Caco-2 (cell line): ENCODE measurements at regions of chr17 and their contacts with region 1.

Region 1: GRCh38 chr17:81142301-81143199 is 22.8 kb upstream of the PVALEF start:
- DNase-seq: peak; percentile 88 to 90
- H3K4me3 ChIP-seq: no peak overlapping the region
- H3K4me3 Mint-ChIP-seq: no peak overlapping the region
- H3K27ac Mint-ChIP-seq: no peak overlapping the region
- H3K4me1 ChIP-seq: peaks cover 6% of the 10 kb centered on the region
- H3K4me1 Mint-ChIP-seq: no peaks in the 10 kb centered on the region
- H3K27me3 ChIP-seq: no peaks in the 10 kb centered on the region
- H3K27me3 Mint-ChIP-seq: no peaks in the 10 kb centered on the region
- CTCF ChIP-seq: peak; percentile 62 to 81

Region 2: DNA sequence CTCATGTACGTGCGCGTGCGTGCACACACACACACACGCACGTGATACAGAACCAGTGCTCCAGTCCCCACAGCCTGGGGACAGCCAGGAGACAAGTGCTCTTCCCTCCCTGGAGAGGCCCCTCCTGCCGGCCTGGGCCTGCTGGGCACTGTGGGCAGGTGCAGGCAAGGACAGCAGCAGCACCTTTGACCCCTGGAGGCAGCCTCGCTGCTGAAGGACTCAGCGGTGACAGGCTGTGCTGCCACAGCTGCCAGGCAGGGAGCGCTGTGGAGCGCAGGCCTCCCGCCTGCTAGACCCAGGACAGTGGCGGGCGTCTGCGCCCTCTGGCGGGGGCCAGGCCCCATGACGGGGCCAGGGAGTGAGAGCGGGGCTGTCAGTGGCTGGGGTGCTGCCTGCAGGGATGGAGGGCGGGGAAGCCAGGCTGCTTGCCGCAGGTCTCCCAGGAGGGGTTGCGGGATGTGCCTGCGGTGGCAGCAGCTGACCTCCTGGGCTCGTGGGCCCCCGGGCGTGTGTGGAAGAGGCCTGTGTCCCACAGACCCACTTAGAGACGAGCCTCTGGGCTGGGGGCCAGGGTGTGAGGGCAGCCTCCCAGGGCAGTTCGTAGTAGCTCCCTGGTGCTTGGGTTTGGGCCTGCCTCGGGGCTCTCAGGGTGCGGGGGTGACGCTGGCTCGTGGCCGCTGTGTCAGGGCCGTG is 40.8 kb before region 1 on chr17:
- CTCF ChIA-PET with region 1: no interaction called
- POLR2A ChIA-PET with region 1: no interaction called
- intact Hi-C with region 1: no loop called
- DNase-seq: peak; percentile 88 to 94
- H3K4me3 ChIP-seq: no peak overlapping the region
- H3K4me3 Mint-ChIP-seq: no peak overlapping the region
- H3K27ac Mint-ChIP-seq: peak overlapping the region; percentile 59
- H3K4me1 ChIP-seq: no peaks in the 10 kb centered on the region; the same call in 1 of the 2 replicates
- H3K4me1 Mint-ChIP-seq: no peaks in the 10 kb centered on the region
- H3K27me3 ChIP-seq: no peaks in the 10 kb centered on the region
- H3K27me3 Mint-ChIP-seq: no peaks in the 10 kb centered on the region
- CTCF ChIP-seq: peak; percentile 99 to 100

Region 3: DNA sequence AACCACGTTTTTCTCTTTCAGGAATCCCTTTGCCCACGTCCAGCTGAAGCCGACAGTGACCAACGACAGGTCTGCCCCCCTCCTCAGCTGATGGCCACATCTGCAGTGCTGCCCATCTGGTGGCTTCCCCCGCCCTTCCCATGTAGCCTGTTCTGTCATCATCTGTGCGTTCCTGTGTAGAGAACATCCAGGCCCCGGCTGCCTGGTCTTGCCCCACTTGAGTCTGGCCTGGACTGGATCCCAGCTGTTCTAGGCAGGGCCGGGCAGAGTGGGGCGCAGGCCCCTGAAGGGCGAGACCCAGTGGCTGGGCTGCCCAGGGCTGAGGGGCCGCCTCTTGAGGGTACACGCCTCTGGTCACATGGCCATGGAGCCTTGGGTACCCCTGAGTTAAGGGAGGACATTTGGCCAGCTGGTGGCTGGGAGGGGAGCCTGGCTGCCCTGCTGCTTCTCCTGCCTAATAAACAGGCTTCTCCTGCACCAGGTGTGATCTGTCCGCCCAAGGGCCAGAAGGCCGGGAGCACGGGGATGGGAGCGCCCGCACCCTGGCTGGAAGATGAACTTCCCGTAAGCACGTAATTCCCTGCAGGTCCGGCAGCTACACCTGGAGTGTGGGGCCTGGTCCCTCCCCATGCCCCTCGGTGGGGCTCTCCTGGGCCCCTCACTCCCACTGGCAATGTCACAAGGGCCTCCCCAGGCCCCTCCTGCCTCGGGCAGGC is 26.6 kb before region 1 on chr17:
- CTCF ChIA-PET with region 1: no interaction called
- POLR2A ChIA-PET with region 1: no interaction called
- intact Hi-C with region 1: no loop called
- DNase-seq: no peak
- H3K4me3 ChIP-seq: no peak overlapping the region
- H3K4me3 Mint-ChIP-seq: no peak overlapping the region
- H3K27ac Mint-ChIP-seq: no peak overlapping the region
- H3K4me1 ChIP-seq: no peaks in the 10 kb centered on the region; the same call in 1 of the 2 replicates
- H3K4me1 Mint-ChIP-seq: peaks cover 8% of the 10 kb centered on the region
- H3K27me3 ChIP-seq: no peaks in the 10 kb centered on the region
- H3K27me3 Mint-ChIP-seq: no peaks in the 10 kb centered on the region
- CTCF ChIP-seq: no peak

Region 4: DNA sequence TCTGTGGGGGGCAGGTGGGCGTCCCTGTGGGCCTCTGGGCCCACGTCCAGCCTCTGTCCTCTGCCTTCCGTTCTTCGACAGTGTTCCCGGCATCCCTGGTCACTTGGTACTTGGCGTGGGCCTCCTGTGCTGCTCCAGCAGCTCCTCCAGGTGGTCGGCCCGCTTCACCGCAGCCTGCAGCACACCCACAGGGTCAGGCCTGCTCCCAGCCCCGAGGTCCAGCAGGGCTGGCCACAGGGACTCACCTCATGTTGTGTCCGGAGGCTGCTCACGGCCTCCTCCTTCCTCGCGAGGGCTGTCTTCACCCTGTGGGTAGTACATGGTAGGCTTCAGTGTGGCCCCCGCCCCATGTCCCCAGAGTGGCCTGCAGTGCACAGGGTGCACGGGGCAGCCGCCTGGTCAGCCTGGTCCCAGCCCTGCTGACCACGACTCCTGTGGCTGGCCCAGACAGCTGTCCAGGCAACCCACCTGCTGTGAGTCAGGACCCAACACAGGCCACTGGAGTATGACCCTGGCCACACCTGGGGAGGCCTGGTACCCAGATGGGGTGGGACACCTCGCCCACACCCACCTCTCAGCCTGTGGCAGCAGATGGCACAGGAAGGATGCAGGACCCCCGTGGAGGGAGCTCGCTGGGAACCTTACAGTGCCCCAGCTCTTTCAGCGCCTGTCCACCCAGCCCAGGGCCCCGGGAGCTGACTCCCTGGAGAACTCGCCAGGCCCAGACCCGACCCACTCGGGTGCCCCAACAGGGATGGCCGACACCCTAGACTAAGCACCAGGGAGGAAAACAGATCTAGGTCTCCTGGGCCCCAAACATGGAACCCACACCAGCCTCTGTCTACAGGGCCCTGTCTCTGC is 47.4 kb after region 1 on chr17:
- CTCF ChIA-PET with region 1: interaction called, 10 read pairs
- POLR2A ChIA-PET with region 1: no interaction called
- intact Hi-C with region 1: loop called (anchors 1 kb)
- DNase-seq: peak in 1 of 2 experiments; percentile 68
- H3K4me3 ChIP-seq: no peak overlapping the region
- H3K4me3 Mint-ChIP-seq: no peak overlapping the region
- H3K27ac Mint-ChIP-seq: no peak overlapping the region
- H3K4me1 ChIP-seq: no peaks in the 10 kb centered on the region
- H3K4me1 Mint-ChIP-seq: no peaks in the 10 kb centered on the region
- H3K27me3 ChIP-seq: no peaks in the 10 kb centered on the region
- H3K27me3 Mint-ChIP-seq: no peaks in the 10 kb centered on the region
- CTCF ChIP-seq: peak; percentile 65 to 69

Region 5: DNA sequence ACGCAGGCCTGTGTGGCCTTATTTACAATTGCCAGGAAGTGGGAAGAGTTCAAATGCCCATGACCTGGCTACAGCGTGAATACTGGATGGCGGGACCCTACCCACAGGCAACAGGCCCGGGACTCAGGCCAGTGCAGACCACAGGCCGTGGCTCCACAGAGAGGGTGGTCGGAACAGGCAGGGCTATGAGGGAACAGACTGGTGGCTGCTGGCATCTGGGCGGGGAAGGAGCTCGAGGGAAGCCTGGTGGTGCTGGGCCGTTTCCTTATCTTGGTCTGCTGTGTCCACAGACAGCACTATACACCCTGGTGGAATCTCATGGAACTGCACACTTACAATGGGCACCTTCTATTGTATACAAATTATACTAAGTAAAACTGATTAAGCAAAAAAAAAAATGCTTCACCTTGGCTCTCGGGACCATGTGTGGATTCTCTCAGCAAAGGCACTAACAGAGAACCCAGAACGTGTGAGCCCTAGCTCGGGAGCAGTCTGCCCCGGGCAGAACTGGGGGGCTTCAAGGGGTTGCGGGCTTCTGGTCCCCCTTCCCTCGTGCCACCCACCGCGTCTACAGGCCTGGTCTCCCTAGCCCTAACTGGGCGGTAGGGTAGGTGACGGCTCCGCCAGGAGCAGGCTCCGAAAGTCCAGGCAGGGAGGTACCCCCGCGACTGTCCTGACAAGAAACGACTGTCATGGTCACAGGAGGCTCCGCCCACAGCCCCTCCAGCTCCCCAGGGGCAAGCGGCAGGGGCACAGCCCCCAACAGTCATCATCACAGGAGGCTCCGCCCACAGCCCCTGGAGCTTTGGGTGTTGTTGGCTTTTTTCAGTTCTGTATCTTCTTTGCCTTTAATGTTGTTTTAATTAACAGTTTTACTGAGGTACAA is 58.4 kb after region 1 on chr17:
- CTCF ChIA-PET with region 1: interaction called, 16 read pairs
- POLR2A ChIA-PET with region 1: no interaction called
- intact Hi-C with region 1: loop called (anchors 1 kb)
- DNase-seq: peak; percentile 75 to 79
- H3K4me3 ChIP-seq: no peak overlapping the region
- H3K4me3 Mint-ChIP-seq: no peak overlapping the region
- H3K27ac Mint-ChIP-seq: no peak overlapping the region
- H3K4me1 ChIP-seq: no peaks in the 10 kb centered on the region
- H3K4me1 Mint-ChIP-seq: no peaks in the 10 kb centered on the region
- H3K27me3 ChIP-seq: no peaks in the 10 kb centered on the region
- H3K27me3 Mint-ChIP-seq: no peaks in the 10 kb centered on the region
- CTCF ChIP-seq: peak; percentile 61 to 75

Region 6: GRCh38 chr17:81238817-81239600 is 96.5 kb after region 1 on chr17 and contains the starts of genes NDUFAF8 and TEPSIN:
- CTCF ChIA-PET with region 1: interaction called, 11 read pairs
- POLR2A ChIA-PET with region 1: no interaction called
- intact Hi-C with region 1: loop called (anchors 1 kb)
- DNase-seq: peak; percentile 98 to 99
- H3K4me3 ChIP-seq: peak within 1 kb of the TSS; percentile 91
- H3K4me3 Mint-ChIP-seq: peak within 1 kb of the TSS; percentile 82
- H3K27ac Mint-ChIP-seq: peak within 1 kb of the TSS; percentile 71
- H3K4me1 ChIP-seq: peaks cover 27% of the 10 kb centered on the region
- H3K4me1 Mint-ChIP-seq: peaks cover 19% of the 10 kb centered on the region
- H3K27me3 ChIP-seq: no peaks in the 10 kb centered on the region
- H3K27me3 Mint-ChIP-seq: no peaks in the 10 kb centered on the region
- CTCF ChIP-seq: no peak
- total RNA-seq, gene NDUFAF8: 65.0 and 66.7 TPM in 2 replicates
- total RNA-seq, gene TEPSIN: 38.7 and 40.3 TPM in 2 replicates